Activated B cell treated with CpG ODN at 0.5 μM for 24 hours (primary cell): ENCODE measurements at regions of chr17 and their contacts with region 1.

Region 1: DNA sequence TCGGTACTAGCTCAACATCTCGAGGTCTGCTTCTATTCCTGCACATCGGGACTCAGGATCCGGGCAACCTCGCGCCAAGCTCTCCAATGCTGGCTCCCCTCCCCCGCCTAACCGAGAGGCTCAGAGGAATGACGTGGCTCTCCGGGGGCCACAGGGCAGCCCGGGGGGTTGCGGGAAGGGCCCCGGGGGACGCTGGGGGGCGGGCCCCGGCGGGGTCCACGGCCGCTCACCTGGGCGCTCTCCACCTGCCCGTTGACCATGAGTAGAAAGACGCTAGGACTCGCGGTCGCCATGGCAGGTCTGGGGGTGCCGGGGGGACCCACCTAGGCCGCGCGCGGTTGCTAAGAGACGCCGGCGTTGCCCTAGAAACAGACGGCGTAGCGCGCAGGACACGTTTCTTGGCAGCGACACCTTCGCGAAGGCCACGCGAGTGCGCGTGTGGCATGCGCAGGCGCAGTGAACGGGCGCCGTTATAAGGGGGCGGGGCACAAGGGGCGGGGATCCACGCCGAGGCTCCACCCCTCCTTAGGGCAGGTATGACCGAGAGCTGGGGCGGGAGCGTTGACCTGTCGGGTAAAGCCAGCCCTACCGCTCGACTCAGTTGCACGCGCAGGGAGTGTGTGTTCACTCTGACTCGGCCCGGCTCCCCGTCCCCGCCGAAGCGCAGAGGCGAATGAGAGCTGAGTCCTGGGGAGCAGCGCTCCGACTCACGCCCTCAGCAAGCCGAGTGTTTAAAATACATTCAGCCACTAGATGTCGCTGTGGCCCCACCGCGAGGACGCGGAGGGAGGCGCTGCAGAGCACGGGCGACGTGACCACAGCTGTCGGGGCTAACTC is at the start of gene B9D1:
- DNase-seq: peak; percentile 85
- ATAC-seq: peak; percentile 92
- H3K4me3 Mint-ChIP-seq: peak within 1 kb of the TSS; percentile 93
- H3K27ac Mint-ChIP-seq: peak within 1 kb of the TSS; percentile 87
- H3K4me1 Mint-ChIP-seq: peaks cover 7% of the 10 kb centered on the region
- H3K27me3 Mint-ChIP-seq: peaks cover 4% of the 10 kb centered on the region
- CTCF ChIP-seq: peak; percentile 98
- total RNA-seq, gene B9D1: 3.3 and 6.7 TPM in 2 replicates

Region 2: GRCh38 chr17:19447085-19447583 is 84.6 kb after region 1 on chr17:
- CTCF ChIA-PET with region 1: interaction called, 76 read pairs
- POLR2A ChIA-PET with region 1: interaction called, 6 read pairs
- intact Hi-C with region 1: loop called (anchors 1 kb)
- DNase-seq: no peak
- ATAC-seq: peak; percentile 65
- H3K4me3 Mint-ChIP-seq: no peak overlapping the region
- H3K27ac Mint-ChIP-seq: no peak overlapping the region
- H3K4me1 Mint-ChIP-seq: peaks cover 5% of the 10 kb centered on the region
- H3K27me3 Mint-ChIP-seq: peaks cover 17% of the 10 kb centered on the region
- CTCF ChIP-seq: peak; percentile 63

Region 3: DNA sequence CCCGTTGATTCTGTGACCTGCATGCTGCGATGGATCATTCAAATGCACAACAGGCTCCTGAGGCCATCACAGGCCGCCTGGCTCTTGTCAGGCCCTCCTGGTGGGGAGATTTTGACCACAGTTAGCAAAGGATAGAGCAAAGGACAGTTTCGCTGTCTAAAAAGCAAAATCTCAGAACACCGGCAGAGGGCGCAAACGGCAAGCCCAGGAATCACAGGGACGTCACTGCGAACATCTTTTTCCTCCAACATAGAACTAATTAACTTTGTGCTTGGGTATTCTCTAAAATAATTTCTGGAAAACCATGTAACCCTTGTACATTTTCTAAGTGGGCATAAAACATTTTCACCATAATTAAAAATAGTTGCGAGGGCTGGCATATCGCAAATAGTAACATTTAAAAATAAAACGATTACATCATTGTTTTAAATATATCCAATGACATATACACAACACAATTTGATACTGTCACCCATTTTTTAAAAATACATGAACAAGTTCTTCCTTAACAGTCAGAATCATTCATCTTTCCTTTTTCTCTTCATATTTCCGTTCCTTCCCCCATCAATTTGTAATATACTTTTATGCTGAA is 151.5 kb after region 1 on chr17:
- CTCF ChIA-PET with region 1: interaction called, 13 read pairs
- POLR2A ChIA-PET with region 1: no interaction called
- intact Hi-C with region 1: loop called (anchors 1 kb)
- DNase-seq: peak; percentile 54
- ATAC-seq: peak; percentile 85
- H3K4me3 Mint-ChIP-seq: no peak overlapping the region
- H3K27ac Mint-ChIP-seq: no peak overlapping the region
- H3K4me1 Mint-ChIP-seq: peaks cover 8% of the 10 kb centered on the region
- H3K27me3 Mint-ChIP-seq: no peaks in the 10 kb centered on the region
- CTCF ChIP-seq: peak; percentile 92